Activated CD4-positive, alpha-beta T cell treated with anti-CD3 and anti-CD28 coated beads, Interleukin-2, amount 10 ng/mL, durations not matched to agents 24 days and 14 days (primary cell): ENCODE measurements at regions of chr14 and their contacts with region 1.

Region 1: DNA sequence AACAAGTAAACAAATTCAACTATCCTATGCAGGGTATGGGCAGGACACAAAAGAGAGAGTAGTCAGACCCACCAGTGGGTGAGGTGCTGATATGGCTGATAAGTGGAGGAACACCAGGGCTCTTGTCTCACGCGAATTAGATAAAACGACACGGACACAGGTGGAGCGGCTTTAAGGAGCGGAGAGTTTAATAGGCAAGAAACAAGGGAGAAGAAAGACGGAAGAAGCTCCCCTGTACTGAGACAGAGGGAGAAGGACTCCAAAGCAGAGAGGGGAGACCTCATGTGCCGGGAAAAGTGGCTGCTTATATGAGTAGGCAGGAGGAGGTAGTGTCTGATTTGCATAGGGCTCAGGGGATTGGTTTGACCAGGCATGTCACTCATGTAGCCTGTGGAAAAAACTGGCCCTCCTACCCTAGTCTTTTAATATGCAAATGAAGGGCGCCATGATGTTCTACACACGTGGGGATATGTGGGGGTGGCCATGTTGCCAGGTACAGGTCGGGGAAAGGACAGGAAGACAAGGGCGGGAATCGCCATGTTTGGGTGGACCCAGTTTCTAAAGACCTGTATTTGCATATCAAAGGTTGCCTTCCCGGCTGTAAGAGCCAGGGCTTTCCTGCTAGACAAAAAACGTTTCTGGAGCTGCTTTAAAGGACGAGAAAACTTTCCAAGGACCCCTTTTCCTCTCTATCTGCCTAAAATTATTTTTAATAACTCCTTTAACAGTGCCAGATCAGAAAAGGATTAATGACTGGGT is 28.8 kb downstream of the RPGRIP1 start:
- DNase-seq: peak; percentile 91
- H3K4me3 Mint-ChIP-seq: peak overlapping the region; percentile 78
- H3K27ac Mint-ChIP-seq: peak overlapping the region; percentile 81
- H3K4me1 Mint-ChIP-seq: peaks cover 14% of the 10 kb centered on the region
- H3K27me3 Mint-ChIP-seq: peaks cover 5% of the 10 kb centered on the region

Region 2: GRCh38 chr14:21269252-21270046 is 39.2 kb before region 1 on chr14 and contains the start of gene HNRNPC:
- intact Hi-C with region 1: loop called (anchors 1 kb)
- DNase-seq: peak; percentile 100
- H3K4me3 Mint-ChIP-seq: peak within 1 kb of the TSS; percentile 92
- H3K27ac Mint-ChIP-seq: peak within 1 kb of the TSS; percentile 100
- H3K4me1 Mint-ChIP-seq: peaks cover 30% of the 10 kb centered on the region
- H3K27me3 Mint-ChIP-seq: no peaks in the 10 kb centered on the region
- total RNA-seq, gene HNRNPC: 1,009 and 1,054 TPM in 2 replicates

Region 3: DNA sequence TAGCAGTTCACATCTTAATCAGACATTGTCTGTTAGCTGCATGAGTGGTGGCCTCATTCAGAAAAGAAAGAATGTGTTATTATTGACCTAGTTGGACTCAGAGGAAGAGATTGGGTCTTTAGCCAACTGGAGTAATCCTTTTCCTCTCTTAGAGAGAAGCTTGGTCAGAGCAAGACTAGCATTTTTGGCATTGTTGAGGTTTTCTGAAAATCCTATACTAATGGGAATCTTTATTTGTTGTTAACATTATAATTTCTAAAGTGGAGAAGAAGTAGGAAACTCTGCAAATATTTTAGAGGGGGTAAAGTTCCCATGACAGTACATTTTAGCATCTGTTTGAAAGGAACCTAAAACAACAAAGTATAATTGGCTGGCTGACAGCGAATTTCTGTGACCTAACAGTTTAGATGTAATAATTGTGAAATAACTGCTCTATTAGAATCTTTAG is 178.0 kb after region 1 on chr14:
- intact Hi-C with region 1: no loop called
- DNase-seq: no peak
- H3K4me3 Mint-ChIP-seq: no peak overlapping the region
- H3K27ac Mint-ChIP-seq: no peak overlapping the region
- H3K4me1 Mint-ChIP-seq: no peaks in the 10 kb centered on the region
- H3K27me3 Mint-ChIP-seq: no peaks in the 10 kb centered on the region